HEK293 (cell line): ENCODE measurements at regions of chr22 and their contacts with region 1.

Region 1: DNA sequence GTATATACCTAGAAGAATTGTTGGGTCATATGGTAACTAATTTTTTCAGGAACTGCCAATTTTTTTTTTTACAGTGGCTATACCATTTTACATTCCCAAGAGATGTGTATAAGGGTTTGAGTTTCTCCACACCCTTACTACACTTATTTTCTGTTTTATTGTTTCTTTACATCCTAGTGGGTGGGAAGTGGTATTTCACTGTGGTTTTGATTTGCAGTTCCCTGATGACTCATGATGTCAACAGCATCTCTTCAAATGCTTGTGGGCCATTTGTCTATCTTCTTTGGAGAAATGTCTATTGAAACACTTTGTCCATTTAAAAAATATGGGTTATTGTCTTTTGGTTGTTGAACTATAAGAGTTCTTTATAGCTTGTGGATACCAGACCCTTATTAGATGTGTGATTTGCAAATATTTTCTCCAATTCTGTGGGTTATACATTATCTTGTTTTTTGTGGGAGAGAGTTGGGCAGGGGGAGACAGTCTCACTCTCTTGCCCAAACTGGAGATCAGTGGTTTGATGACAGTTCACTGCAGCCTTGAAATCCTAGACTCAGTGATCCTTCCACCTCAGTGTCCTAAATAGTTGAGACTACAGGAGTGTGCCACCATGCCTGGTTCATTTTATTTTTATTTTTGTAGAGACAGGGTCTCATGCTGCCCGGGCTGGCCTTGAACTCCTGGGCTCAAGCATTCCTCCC is 30.3 kb upstream of the PISD start:
- H3K4me3 ChIP-seq: no peak overlapping the region
- H3K27ac ChIP-seq: no peak overlapping the region
- H3K4me1 ChIP-seq: no peaks in the 10 kb centered on the region
- CTCF ChIP-seq: no peak

Region 2: DNA sequence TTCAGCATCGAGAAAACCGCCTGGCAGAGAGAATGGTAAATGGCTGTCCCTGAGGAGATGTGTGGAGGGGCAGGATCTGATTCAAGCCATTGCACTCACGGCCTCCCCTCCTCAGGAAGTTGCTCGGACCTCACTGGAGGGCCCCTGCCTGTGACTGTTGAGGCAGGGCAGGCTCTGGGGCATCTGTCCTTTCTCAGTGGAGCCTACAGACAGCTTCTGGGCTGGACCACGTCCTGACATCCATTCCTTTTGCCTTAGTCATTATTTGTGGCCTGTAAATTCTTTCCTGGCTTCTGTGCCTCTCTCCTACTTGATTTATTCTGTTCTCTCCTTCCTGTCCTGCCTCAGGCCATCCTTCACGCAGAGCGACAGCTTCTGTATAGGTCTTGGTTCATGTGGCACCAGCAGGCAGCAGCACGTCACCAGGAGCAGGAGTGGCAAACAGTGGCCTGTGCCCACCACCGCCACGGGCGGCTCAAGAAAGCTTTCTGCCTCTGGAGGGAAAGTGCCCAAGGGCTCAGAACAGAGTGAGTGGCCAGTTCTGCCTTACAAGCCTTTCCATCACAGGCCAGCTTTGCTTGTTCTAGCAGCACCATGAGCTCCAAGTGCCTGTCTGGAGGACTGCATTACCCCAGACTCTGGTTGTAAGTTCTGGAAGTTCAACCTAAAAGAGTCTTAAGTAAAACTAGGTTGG is 89.9 kb before region 1 on chr22:
- CTCF ChIA-PET with region 1: no interaction called
- POLR2A ChIA-PET with region 1: no interaction called
- H3K4me3 ChIP-seq: no peak overlapping the region
- H3K27ac ChIP-seq: no peak overlapping the region
- H3K4me1 ChIP-seq: no peaks in the 10 kb centered on the region
- CTCF ChIP-seq: no peak

Region 3: DNA sequence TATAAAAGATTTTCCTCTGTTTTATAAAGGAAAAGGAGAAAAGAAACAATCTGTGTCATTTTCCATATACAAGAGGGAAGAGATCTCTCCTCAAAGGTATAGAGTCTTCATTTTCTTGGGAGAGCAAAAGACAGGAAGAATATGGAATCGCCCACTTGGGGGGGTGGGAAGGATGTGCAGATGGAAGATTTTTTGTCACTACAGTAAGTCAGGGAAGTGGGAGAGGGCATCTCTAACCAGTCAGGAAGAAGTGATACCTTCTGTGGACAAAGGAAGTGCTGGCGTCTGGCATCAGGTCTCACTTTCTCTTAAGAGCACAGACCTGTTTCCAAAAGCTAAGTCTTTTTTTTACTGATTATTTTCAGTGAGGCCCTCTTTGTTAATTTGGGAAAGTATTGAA is 56.2 kb after region 1 on chr22:
- CTCF ChIA-PET with region 1: no interaction called
- POLR2A ChIA-PET with region 1: interaction called, 14 read pairs
- H3K4me3 ChIP-seq: peak overlapping the region; percentile 94
- H3K27ac ChIP-seq: no peak overlapping the region
- H3K4me1 ChIP-seq: peaks cover 16% of the 10 kb centered on the region; the same call in 1 of the 2 replicates
- CTCF ChIP-seq: no peak

Region 4: DNA sequence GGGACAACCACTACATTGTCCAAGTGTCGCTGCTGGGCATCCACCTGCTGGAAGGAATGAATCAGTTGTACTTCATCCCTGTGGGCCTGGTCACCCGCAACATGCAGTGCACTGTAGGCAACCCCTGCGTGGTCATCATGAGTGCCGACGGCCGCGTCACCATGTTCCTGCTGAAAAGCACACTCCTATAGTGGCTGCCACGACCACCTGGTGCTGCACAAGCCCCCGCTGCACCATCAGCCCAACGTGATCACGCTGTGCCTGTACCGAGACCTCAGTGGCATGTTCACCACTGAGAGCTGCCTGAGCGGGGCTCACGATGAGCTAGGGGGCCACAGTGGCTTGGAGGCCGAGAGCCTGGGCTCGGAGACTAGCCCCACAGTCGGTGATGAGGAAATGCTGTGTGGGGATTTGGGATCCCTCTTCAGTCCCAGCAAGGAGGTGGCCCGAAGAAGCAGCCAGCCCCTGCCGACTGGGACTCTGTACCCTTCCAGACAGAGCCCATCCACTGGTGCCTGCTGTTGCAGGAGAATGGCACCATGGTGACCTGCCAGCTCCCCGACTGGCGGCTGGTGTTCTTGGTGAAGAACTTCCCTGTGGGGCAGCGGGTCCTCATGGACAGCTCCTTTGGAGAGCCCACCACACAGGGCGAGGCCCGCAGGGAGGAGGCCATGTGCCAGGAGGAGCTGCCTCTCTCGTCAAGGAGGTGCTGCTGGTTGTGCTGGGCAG is 578.5 kb after region 1 on chr22:
- CTCF ChIA-PET with region 1: no interaction called
- POLR2A ChIA-PET with region 1: no interaction called
- H3K4me3 ChIP-seq: no peak overlapping the region
- H3K27ac ChIP-seq: no peak overlapping the region
- H3K4me1 ChIP-seq: no peaks in the 10 kb centered on the region
- CTCF ChIP-seq: no peak